Calu3 (cell line): ENCODE measurements at regions of chr7 and their contacts with region 1.

Region 1: GRCh38 chr7:32490127-32490822 is at the start of gene LSM5:
- DNase-seq: peak; percentile 94
- H3K4me3 Mint-ChIP-seq: peak within 1 kb of the TSS; percentile 95
- H3K27ac Mint-ChIP-seq: peak within 1 kb of the TSS; percentile 93
- H3K4me1 Mint-ChIP-seq: peaks cover 7% of the 10 kb centered on the region
- H3K27me3 Mint-ChIP-seq: no peaks in the 10 kb centered on the region
- CTCF ChIP-seq: no peak
- total RNA-seq, gene LSM5: 146 and 160 TPM in 2 replicates

Region 2: GRCh38 chr7:31744294-31744874 is 745.9 kb before region 1 on chr7:
- CTCF ChIA-PET with region 1: no interaction called
- intact Hi-C with region 1: no loop called
- DNase-seq: peak; percentile 82
- H3K4me3 Mint-ChIP-seq: no peak overlapping the region
- H3K27ac Mint-ChIP-seq: no peak overlapping the region
- H3K4me1 Mint-ChIP-seq: peaks cover 21% of the 10 kb centered on the region
- H3K27me3 Mint-ChIP-seq: no peaks in the 10 kb centered on the region
- CTCF ChIP-seq: peak; percentile 93

Region 3: DNA sequence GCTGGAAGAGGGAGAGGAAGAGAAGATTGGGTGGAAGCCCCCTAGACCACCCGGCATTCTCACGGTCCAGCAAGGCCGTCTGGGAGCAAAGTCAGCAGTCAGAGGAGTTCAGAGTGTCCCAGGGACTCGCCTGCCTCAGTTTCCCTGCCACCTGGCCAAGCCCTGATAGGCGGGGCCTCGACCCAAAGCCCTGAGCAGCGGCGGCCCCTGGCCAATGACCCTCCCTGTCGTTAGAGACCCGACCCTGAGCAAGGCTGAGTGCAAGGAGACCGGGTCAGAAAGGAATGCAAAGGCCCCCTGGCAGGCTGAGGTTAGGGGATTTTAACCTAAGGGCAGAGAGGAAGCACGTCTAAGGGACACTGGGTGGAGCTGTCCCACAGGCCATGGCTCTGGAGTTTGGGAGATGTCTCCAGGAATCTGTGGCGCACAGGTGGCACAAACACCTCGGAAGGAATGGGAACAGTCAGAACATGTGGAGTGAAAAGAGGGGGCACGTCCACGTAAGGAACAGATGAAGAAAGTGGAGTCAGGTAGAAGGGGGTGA is 223.3 kb before region 1 on chr7:
- CTCF ChIA-PET with region 1: no interaction called
- intact Hi-C with region 1: no loop called
- DNase-seq: no peak
- H3K4me3 Mint-ChIP-seq: no peak overlapping the region
- H3K27ac Mint-ChIP-seq: no peak overlapping the region
- H3K4me1 Mint-ChIP-seq: no peaks in the 10 kb centered on the region
- H3K27me3 Mint-ChIP-seq: peaks cover 82% of the 10 kb centered on the region
- CTCF ChIP-seq: no peak

Region 4: GRCh38 chr7:32569388-32570289 is 79.4 kb after region 1 on chr7:
- CTCF ChIA-PET with region 1: interaction called, 7 read pairs
- intact Hi-C with region 1: loop called (anchors 2 kb)
- DNase-seq: no peak
- H3K4me3 Mint-ChIP-seq: peak overlapping the region; percentile 20
- H3K27ac Mint-ChIP-seq: peak overlapping the region; percentile 72
- H3K4me1 Mint-ChIP-seq: peaks cover 16% of the 10 kb centered on the region
- H3K27me3 Mint-ChIP-seq: no peaks in the 10 kb centered on the region
- CTCF ChIP-seq: no peak

Region 5: DNA sequence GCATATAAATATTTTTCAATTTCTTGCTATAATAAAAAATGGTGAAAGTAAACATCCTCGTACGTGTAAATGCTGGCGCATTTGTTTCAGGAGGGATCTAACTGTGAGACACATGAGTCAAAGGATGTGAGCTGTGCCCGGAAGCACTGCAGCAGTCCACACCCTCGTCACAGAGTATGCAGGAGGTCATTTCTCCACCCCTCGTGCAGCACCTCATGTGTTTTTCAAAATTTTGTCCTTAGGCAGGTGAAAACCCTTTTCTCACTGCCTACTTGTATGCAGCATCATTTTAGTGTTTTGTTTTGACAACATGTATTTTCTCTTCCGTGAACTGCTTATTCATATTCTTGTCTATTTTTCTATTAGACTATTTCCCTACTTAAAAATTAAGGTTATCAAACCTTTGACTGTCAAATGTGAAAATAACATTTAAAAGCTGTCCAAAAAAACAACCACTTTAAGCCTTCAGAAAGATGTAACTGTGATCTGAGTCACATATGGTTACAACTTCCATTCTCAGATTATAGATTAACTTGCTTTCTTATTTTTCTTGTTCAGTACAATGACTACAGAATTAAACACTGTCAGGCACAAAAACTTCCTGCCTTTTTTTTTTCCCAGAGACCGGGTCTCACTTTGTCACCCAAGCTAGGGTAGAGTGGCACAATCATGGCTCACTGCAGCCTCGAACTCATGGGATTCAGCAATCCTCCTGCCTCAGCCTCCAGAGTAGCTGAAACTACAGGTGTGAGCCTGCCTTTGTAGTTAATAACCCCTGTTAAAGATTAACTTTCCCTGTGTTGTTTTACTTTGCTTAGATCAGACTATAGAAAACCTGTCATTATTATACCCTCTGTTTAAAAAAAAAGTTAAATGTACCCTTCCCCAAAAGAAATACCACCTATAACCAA is 168.0 kb after region 1 on chr7:
- CTCF ChIA-PET with region 1: interaction called, 3 read pairs
- intact Hi-C with region 1: loop called (anchors 2 kb)
- DNase-seq: peak; percentile 78
- H3K4me3 Mint-ChIP-seq: peak overlapping the region; percentile 47
- H3K27ac Mint-ChIP-seq: peak overlapping the region; percentile 94
- H3K4me1 Mint-ChIP-seq: peaks cover 68% of the 10 kb centered on the region
- H3K27me3 Mint-ChIP-seq: no peaks in the 10 kb centered on the region
- CTCF ChIP-seq: no peak

Region 6: DNA sequence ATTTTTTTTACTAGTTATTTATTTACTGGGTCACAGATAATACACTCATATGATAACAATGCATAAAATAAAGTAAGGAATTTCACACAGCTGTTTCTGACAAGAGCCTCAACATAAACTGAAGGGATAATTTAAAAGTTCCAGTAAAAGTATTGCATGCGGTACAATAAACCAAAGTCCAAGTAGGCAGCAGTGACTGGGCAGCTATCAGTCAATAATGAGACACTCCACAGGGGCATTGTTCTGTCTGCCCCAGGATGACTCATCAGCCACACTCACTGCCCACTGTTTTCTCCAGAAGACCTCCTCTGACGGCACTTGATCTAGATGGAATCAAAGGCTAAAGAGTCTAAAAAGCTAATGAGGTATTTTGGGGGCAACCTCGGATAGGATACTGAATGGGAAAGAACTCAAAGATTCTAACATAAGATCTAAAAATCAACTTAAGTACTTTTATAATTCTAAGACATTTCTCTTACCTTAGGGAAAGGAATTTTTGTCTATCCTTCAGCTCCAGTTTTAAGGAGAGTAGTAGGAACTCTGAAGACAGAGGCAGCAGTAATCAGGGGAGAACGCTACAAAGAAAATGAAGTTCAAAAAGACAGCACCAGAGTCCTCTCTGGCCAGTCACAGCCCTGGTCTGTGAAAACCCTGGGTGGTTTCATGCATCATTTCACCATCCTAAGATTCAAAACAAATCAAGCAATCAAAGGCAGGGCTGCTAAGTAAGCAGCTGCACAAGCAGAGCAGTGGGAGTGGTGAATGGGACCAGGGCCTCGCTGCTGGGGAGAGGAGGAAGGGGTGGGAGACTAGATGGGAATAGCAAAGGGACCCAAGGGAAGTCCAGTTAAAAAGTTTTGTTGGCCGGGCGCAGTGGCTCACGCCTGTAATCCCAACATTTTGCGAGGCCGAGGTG is 180.1 kb after region 1 on chr7:
- CTCF ChIA-PET with region 1: no interaction called
- intact Hi-C with region 1: loop called (anchors 2 kb)
- DNase-seq: peak; percentile 82
- H3K4me3 Mint-ChIP-seq: peak overlapping the region; percentile 52
- H3K27ac Mint-ChIP-seq: peak overlapping the region; percentile 99
- H3K4me1 Mint-ChIP-seq: peaks cover 74% of the 10 kb centered on the region
- H3K27me3 Mint-ChIP-seq: no peaks in the 10 kb centered on the region
- CTCF ChIP-seq: no peak

Region 7: DNA sequence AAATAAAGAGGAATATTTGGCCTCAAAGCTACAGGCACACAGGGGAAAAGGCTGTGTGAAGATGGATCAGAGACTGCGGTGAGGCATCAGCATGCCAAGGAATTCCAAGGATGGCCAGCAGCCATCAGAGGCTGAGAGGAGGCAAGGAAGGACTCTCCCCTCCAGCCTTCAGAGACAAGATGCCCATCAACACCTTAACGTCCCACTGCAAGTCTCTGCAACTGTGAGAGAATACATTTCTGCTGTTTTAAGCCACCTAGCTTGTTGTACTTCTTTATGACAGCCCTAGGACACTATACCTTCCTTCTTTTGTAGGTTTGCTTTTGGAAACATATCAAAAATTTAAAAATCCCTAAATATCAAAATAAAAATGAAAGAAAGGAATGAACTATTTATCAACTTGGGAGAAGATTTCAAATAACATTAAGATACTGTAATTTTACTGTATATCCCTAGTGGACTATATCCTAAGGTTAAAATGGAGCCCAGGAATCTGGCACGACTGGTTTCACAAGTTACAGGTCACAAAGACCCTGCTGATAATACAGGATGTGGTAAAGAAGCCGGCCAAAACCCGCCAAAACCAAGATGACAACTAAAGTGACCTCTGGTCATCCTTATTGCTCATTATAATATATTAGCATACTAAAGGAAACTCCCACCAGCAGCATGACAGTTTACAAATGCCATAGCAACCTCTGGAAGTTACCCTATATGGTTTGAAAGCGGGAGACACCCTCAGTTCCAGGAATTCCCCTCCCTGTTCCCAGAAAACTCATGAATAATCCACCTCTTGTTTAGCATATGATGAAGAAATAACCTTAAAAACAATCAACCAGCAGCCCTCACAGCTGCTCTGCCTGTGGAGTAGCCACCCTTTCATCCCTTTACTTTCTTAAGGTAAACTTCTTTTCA is 190.2 kb after region 1 on chr7:
- CTCF ChIA-PET with region 1: no interaction called
- intact Hi-C with region 1: loop called (anchors 2 kb)
- DNase-seq: peak; percentile 95
- H3K4me3 Mint-ChIP-seq: peak overlapping the region; percentile 26
- H3K27ac Mint-ChIP-seq: peak overlapping the region; percentile 96
- H3K4me1 Mint-ChIP-seq: peaks cover 53% of the 10 kb centered on the region
- H3K27me3 Mint-ChIP-seq: no peaks in the 10 kb centered on the region
- CTCF ChIP-seq: no peak